ENCODE measurements at regions of chr11 and their contacts with region 1.

Region 1: GRCh38 chr11:116835791-116836631 is 1.4 kb downstream of the APOA1 start:
- DNase-seq: peak; percentile 61
- ATAC-seq: peak; percentile 1; the same call in 2 of the 3 replicates
- H3K4me3 ChIP-seq: peak overlapping the region; percentile 75 to 95 (median 92)
- H3K27ac ChIP-seq: peak overlapping the region; percentile 99
- H3K4me1 ChIP-seq: peaks cover 87% of the 10 kb centered on the region
- H3K27me3 ChIP-seq: no peaks in the 10 kb centered on the region
- CTCF ChIP-seq: peak; percentile 86
- EP300 ChIP-seq: no peak
- POLR2A ChIP-seq: no peak; a peak in 1 of 4 replicates
- RAD21 ChIP-seq: peak; percentile 90

Region 2: GRCh38 chr11:116772443-116773202 is 63.4 kb before region 1 on chr11 and contains the start of gene BUD13:
- CTCF ChIA-PET with region 1: no interaction called
- POLR2A ChIA-PET with region 1: interaction called, 59 read pairs
- in situ Hi-C with region 1: no loop called
- intact Hi-C with region 1: no loop called
- DNase-seq: peak; percentile 78
- ATAC-seq: peak; percentile 95
- H3K4me3 ChIP-seq: peak within 1 kb of the TSS; percentile 89 to 98 (median 92)
- H3K27ac ChIP-seq: peak within 1 kb of the TSS; percentile 75
- H3K4me1 ChIP-seq: peaks cover 42% of the 10 kb centered on the region
- H3K27me3 ChIP-seq: no peaks in the 10 kb centered on the region
- CTCF ChIP-seq: peak; percentile 61
- EP300 ChIP-seq: no peak; a peak in 1 of 4 replicates
- POLR2A ChIP-seq: peak; percentile 76 to 92
- RAD21 ChIP-seq: peak; percentile 43
- total RNA-seq, gene BUD13: 25.9 and 31.9 TPM in 2 replicates

Region 3: DNA sequence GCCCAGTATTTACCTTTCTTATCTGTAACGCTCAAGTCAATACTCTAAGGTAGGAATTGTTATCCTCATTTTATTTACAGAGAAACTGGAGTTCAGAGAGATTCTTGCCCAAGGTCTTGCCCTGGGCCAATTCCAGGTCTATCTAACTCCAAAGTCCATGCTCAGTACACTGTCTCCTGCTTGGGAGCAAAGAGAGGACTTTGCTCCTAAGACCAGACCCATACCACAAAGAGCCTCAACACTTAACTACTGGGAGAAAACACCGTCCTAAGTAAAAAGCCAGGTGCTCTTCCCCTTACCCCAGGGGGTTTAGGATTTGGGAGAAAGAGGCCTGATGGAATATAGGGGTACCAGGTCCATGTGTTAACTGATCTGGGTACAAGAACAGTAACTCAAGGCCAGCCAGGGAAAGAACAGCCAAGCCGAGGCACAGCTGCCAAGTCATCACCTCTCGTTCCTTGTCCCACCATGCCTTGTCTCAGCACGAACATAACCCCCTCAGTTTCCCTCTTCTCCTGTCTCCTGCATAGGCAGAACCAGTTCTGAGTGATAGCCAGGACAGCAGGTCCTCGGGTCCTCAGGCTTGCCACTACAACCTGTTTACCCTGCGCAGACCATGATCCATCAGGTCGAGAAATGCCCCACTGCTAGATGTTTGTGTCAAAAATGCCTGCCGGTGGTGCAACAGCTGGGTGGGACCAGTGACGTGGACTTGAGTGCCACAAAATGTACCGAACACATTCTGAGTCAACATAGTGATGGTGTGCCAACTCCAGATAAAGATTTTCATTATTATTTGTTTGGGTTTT is 27.4 kb before region 1 on chr11:
- CTCF ChIA-PET with region 1: no interaction called
- POLR2A ChIA-PET with region 1: interaction called, 778 read pairs
- in situ Hi-C with region 1: no loop called
- intact Hi-C with region 1: no loop called
- DNase-seq: peak; percentile 98
- ATAC-seq: peak; percentile 90
- H3K4me3 ChIP-seq: peak overlapping the region; percentile 20 to 62 (median 31); a peak in 5 of 6 replicates
- H3K27ac ChIP-seq: peak overlapping the region; percentile 98
- H3K4me1 ChIP-seq: peaks cover 87% of the 10 kb centered on the region
- H3K27me3 ChIP-seq: no peaks in the 10 kb centered on the region
- CTCF ChIP-seq: no peak
- EP300 ChIP-seq: peak; percentile 97 to 99
- POLR2A ChIP-seq: peak; percentile 68 to 82; a peak in 2 of 4 replicates
- RAD21 ChIP-seq: no peak

Region 4: GRCh38 chr11:116821050-116821918 is 14.7 kb before region 1 on chr11:
- CTCF ChIA-PET with region 1: no interaction called
- POLR2A ChIA-PET with region 1: interaction called, 361 read pairs
- in situ Hi-C with region 1: no loop called
- intact Hi-C with region 1: no loop called
- DNase-seq: no peak
- ATAC-seq: no peak
- H3K4me3 ChIP-seq: no peak overlapping the region
- H3K27ac ChIP-seq: no peak overlapping the region
- H3K4me1 ChIP-seq: peaks cover 61% of the 10 kb centered on the region
- H3K27me3 ChIP-seq: no peaks in the 10 kb centered on the region
- CTCF ChIP-seq: no peak
- EP300 ChIP-seq: no peak
- POLR2A ChIP-seq: no peak
- RAD21 ChIP-seq: no peak

Region 5: DNA sequence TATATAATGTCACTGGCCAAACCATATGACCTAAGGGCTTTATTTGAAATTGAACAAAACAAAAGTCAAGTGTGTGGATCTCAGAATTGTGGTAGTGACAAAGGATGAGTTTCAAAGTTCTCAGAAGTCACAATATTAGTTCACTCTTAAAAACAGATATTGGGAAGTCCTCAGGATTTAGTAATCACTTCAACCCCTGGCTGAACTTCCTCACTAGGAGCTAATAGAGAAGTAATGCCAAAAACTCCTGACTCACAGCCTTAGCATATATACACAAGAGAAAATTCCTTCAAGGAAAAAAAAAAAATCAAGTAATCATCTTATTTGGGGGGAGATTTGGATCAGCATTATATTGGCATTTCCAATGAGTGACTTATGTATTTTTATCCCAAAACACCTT is 77.0 kb after region 1 on chr11:
- CTCF ChIA-PET with region 1: no interaction called
- POLR2A ChIA-PET with region 1: no interaction called
- in situ Hi-C with region 1: no loop called
- intact Hi-C with region 1: no loop called
- DNase-seq: no peak
- ATAC-seq: no peak
- H3K4me3 ChIP-seq: no peak overlapping the region
- H3K27ac ChIP-seq: no peak overlapping the region
- H3K4me1 ChIP-seq: peaks cover 10% of the 10 kb centered on the region
- H3K27me3 ChIP-seq: no peaks in the 10 kb centered on the region
- CTCF ChIP-seq: no peak
- EP300 ChIP-seq: no peak
- POLR2A ChIP-seq: no peak
- RAD21 ChIP-seq: no peak

Region 6: GRCh38 chr11:116927163-116927974 is 91.4 kb after region 1 on chr11:
- CTCF ChIA-PET with region 1: no interaction called
- POLR2A ChIA-PET with region 1: interaction called, 13 read pairs
- in situ Hi-C with region 1: no loop called
- intact Hi-C with region 1: no loop called
- DNase-seq: peak; percentile 13
- ATAC-seq: 0 out of 3 replicates have a peak, but pooled peaks have one; percentile 18
- H3K4me3 ChIP-seq: no peak overlapping the region
- H3K27ac ChIP-seq: no peak overlapping the region
- H3K4me1 ChIP-seq: peaks cover 60% of the 10 kb centered on the region
- H3K27me3 ChIP-seq: no peaks in the 10 kb centered on the region
- CTCF ChIP-seq: peak; percentile 30
- EP300 ChIP-seq: no peak
- POLR2A ChIP-seq: no peak
- RAD21 ChIP-seq: no peak

Region 7: DNA sequence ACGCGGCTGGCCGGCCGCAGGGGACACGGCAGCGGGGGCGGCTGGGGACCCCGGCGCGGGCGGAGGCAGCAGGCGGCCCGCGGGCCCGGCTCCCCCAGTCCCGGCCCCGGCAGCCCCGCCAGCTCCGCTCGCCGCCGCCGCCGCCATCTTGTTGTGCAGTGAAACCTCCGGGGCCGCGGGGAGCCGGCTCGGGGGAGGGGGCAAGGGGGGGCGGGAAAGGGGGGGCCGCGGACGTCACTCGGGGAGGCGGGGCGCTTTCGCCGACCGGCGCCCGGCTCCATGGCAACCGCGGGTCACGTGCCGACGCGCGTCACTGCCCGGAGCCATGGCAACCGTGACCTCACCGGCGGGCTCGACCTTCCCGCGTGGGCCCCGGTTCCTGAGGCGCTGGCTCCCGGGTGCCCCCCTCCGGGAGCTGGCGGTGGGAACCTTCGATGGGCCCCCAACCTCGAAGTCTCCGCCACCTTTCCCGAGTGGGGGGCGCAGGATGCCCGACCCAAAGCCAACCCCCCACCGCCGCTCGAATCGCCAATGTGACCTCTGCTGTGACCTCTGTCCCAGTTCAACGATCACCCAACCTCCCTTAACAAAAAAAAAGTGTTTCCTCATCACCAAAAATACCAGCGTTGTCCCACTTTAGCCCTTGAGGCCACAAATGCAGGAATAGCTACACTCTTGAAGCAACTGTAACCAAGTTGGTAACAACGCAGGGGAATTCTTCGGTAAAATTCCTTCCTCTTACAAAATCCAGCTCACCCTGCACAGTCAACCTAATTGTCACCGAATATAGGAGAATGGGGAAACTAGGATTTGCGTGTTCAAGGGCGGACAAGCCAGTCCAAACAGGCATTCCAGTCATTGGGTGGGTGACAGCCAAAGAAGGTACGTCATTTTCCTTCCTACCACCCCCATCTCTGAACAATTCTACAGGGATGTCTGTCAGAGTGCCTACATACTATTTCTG is 262.5 kb after region 1 on chr11 and contains the start of gene SIK3:
- CTCF ChIA-PET with region 1: no interaction called
- POLR2A ChIA-PET with region 1: interaction called, 69 read pairs
- in situ Hi-C with region 1: no loop called
- intact Hi-C with region 1: no loop called
- DNase-seq: peak; percentile 65
- ATAC-seq: peak; percentile 66
- H3K4me3 ChIP-seq: peak within 1 kb of the TSS; percentile 79 to 89 (median 87)
- H3K27ac ChIP-seq: peak within 1 kb of the TSS; percentile 80
- H3K4me1 ChIP-seq: peaks cover 53% of the 10 kb centered on the region
- H3K27me3 ChIP-seq: no peaks in the 10 kb centered on the region; a peak in 1 of 5 replicates
- CTCF ChIP-seq: peak; percentile 72
- EP300 ChIP-seq: no peak
- POLR2A ChIP-seq: peak in 1 of 2 experiments; percentile 37; a peak in 1 of 4 replicates
- RAD21 ChIP-seq: peak; percentile 68; the same call in 1 of the 2 replicates
- total RNA-seq, gene SIK3: 9.8 and 11.3 TPM in 2 replicates

Region 8: DNA sequence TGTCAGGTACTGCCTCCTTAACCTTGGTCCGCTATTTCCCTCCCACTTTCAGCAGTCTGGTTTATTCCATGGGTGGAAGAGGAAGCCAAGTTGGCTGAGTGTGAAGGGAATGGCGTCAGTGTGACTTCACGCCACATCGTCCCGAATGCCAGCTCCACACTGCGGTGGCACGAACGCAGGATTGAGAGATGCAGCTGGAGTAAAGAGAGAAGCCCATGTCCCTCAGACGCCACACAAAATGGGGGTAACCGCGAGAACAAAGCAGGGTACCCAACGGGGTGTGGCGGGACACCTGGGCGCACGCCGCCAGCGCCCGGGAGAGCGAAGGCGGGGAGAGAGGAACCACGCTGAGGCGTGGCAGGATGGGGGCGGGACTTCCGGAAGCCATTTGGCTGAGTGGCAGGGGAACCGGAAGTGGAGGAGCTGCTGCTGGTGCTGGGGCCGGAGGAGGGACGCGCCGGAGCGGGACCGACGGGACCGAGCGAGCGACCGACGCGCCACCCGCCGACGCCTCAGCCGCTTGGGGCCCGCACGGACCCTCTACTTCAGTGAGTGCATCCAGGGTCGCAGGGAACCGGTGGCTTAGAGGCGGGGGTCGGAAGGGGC is 308.0 kb after region 1 on chr11 and contains the start of gene PAFAH1B2:
- CTCF ChIA-PET with region 1: no interaction called
- POLR2A ChIA-PET with region 1: interaction called, 33 read pairs
- in situ Hi-C with region 1: no loop called
- intact Hi-C with region 1: no loop called
- DNase-seq: peak; percentile 88
- ATAC-seq: peak; percentile 96
- H3K4me3 ChIP-seq: peak within 1 kb of the TSS; percentile 86 to 97 (median 94)
- H3K27ac ChIP-seq: peak within 1 kb of the TSS; percentile 62
- H3K4me1 ChIP-seq: peaks cover 29% of the 10 kb centered on the region
- H3K27me3 ChIP-seq: no peaks in the 10 kb centered on the region; a peak in 1 of 5 replicates
- CTCF ChIP-seq: no peak; the same call in 1 of the 2 replicates
- EP300 ChIP-seq: peak in 1 of 2 experiments; percentile 15; a peak in 1 of 4 replicates
- POLR2A ChIP-seq: peak; percentile 56 to 94
- RAD21 ChIP-seq: no peak
- total RNA-seq, gene PAFAH1B2: 104 and 178 TPM in 2 replicates